Activated CD8-positive, alpha-beta T cell treated with anti-CD3 and anti-CD28 coated beads for 36 hours (primary cell): ENCODE measurements at regions of chr20 and their contacts with region 1.

Region 1: GRCh38 chr20:53869466-53870258 is 200.7 kb downstream of the BCAS1 start:
- DNase-seq: peak; percentile 87
- ATAC-seq: peak; percentile 77
- H3K4me3 Mint-ChIP-seq: peak overlapping the region; percentile 68
- H3K27ac Mint-ChIP-seq: peak overlapping the region; percentile 96
- H3K4me1 Mint-ChIP-seq: peaks cover 74% of the 10 kb centered on the region
- H3K27me3 Mint-ChIP-seq: no peaks in the 10 kb centered on the region
- CTCF ChIP-seq: peak; percentile 89

Region 2: GRCh38 chr20:53708129-53708968 is 161.3 kb before region 1 on chr20:
- CTCF ChIA-PET with region 1: interaction called, 10 read pairs
- POLR2A ChIA-PET with region 1: no interaction called
- intact Hi-C with region 1: no loop called
- DNase-seq: peak; percentile 75
- ATAC-seq: peak; percentile 79
- H3K4me3 Mint-ChIP-seq: peak overlapping the region; percentile 70
- H3K27ac Mint-ChIP-seq: peak overlapping the region; percentile 96
- H3K4me1 Mint-ChIP-seq: peaks cover 56% of the 10 kb centered on the region
- H3K27me3 Mint-ChIP-seq: no peaks in the 10 kb centered on the region
- CTCF ChIP-seq: no peak

Region 3: DNA sequence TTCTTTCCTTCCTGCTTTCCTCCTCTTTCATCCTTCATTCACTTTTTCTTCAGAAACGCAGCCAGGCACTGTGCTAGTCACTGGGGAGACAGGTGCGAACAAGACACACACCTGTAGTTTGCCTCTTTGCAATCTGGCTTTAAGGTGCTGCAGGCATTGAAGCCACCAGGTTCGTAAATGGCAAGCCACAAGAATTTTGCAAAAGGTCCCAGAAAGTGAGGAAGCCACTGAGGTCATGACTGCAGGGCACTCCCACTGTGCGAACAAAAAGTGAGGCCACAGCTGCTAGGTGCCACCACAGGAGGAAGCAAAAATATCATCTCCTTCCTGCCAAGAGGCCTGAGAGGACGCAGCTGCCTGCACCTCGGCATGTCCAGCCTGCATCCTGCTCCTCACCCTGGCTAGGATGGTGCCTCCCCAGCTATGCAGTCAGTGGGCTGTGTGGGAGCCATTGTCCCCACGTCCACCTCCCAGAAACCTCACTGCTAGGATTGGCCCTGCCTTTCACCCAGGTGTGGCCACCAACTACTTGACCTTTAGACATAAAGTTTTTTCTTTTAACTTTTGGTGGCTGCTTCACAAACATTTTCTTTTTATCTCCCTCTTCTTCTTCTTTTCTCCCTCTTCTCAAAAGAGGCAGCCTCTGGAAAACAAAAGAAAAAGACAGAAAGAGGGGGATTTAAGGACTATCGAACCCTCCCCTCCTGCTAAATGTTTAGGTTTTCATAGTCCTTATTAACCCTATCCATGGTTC is 30.1 kb before region 1 on chr20:
- CTCF ChIA-PET with region 1: interaction called, 24 read pairs
- POLR2A ChIA-PET with region 1: interaction called, 10 read pairs
- intact Hi-C with region 1: loop called (anchors 5 kb)
- DNase-seq: peak; percentile 85
- ATAC-seq: peak; percentile 38
- H3K4me3 Mint-ChIP-seq: peak overlapping the region; percentile 33
- H3K27ac Mint-ChIP-seq: peak overlapping the region; percentile 92
- H3K4me1 Mint-ChIP-seq: peaks cover 73% of the 10 kb centered on the region
- H3K27me3 Mint-ChIP-seq: no peaks in the 10 kb centered on the region
- CTCF ChIP-seq: no peak

Region 4: DNA sequence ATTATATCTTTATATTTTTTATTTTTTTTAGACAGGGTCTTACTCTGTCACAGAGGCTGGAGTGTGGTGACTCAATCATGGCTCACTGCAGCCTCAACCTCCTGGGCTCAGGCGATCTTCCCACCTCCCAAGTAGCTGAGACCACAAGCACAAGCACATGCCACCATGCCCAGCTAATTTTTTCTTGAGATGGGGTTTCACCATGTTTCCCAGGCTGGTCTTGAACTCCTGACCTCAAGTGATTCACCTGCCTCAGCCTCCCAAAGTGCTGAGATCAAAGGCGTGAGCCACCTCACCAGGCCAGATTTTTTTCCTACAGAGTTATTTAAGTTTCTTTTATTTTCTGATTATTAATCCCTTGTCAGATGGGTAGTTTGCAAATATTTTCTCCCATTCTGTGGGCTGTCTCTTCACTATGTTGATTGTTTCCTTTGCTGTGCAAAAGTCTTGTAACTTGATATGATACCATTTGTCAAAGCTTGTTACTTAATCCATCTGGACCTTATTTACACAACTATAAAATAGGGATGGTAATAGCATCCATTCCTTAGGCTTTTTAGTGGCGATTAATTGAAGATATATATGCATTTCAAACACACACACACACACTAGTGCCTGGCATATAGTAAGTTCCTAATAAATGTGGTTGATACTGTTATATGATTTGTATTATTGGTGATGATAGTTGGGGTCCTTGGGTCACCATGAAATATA is 13.6 kb after region 1 on chr20:
- CTCF ChIA-PET with region 1: interaction called, 15 read pairs
- POLR2A ChIA-PET with region 1: interaction called, 14 read pairs
- intact Hi-C with region 1: no loop called
- DNase-seq: peak; percentile 66
- ATAC-seq: no peak
- H3K4me3 Mint-ChIP-seq: peak overlapping the region; percentile 71
- H3K27ac Mint-ChIP-seq: peak overlapping the region; percentile 76
- H3K4me1 Mint-ChIP-seq: peaks cover 77% of the 10 kb centered on the region
- H3K27me3 Mint-ChIP-seq: no peaks in the 10 kb centered on the region
- CTCF ChIP-seq: no peak